Heart right ventricle (tissue), 16 donors: ENCODE measurements at regions of chr20 and their contacts with region 1.

Region 1: DNA sequence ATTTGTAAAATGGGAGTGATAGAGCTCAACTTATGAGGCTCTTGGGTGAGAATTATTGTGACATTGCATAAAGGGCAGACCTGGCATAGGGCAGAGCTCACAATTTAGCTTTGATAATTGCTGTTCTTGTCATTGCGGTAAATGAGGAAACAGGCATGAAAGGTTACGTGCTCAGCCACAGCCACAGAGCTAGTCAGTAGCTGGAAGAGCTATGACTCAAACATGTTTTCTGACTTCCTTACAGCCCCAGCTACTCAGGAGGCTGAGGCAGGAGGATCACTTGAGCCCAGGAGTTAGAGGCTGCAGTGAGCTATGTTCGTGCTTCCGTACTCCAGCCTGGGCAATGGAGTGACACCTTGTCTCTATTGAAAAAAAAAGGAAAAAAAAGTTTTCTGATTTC is 3.5 kb upstream of the GHRH start:
- DNase-seq: no peak
- ATAC-seq: no peak
- H3K4me3 ChIP-seq: no peak overlapping the region
- H3K27ac ChIP-seq: no peak overlapping the region
- H3K4me1 ChIP-seq: peaks cover 0 to 4% (median 0%) of the 10 kb centered on the region in 9 donors
- H3K27me3 ChIP-seq: peaks cover 0 to 29% (median 16%) of the 10 kb centered on the region in 7 donors
- CTCF ChIP-seq: no peak

Region 2: DNA sequence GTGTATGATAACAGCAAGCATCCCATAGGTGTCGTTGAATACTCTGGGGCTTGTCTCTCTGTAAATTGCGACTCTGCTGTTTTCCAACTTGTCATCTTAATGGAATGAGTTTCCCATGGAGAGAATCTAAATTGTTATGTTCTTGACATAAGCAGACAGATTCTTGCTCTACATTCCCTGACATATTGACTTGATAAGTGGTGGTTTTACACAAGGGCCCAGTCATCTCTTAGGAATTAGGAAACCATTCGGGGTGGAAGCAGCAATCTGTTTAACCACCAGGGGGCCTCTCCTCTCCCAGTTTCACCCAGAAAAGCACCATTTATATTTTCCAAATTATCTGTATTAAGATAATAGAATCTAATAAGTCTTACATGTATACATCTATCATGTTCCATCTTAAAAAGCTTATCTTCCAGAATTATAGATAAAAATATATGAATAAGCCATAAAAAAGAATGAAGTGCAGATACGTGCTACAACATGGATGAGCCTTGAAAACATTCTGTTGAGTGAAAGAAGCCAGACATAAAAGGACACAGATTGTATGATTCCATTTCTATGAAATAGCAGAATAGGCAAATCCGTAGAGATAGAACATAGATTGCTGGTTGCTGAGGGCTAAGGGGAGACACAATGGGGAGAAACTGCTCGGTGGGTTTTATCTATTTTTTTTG is 62.7 kb before region 1 on chr20:
- intact Hi-C with region 1: loop called in 1 of 10 experiments (anchors 10 kb)
- DNase-seq: peak in 1 of 2 donors; percentile 16
- ATAC-seq: peak in 4 of 8 donors; percentile 56 to 70 (median 64)
- H3K4me3 ChIP-seq: no peak overlapping the region
- H3K27ac ChIP-seq: peak overlapping the region in 1 of 10 donors; percentile 9
- H3K4me1 ChIP-seq: peaks cover 0 to 20% (median 6%) of the 10 kb centered on the region in 9 donors
- H3K27me3 ChIP-seq: no peaks in the 10 kb centered on the region
- CTCF ChIP-seq: peak; percentile 63 to 82 (median 74)